ENCODE measurements at regions of chr10 and their contacts with region 1.

Region 1: GRCh38 chr10:28604567-28605536 is 71.9 kb downstream of the WAC start:
- DNase-seq: no peak
- ATAC-seq: no peak
- H3K4me3 ChIP-seq: no peak overlapping the region
- H3K27ac ChIP-seq: no peak overlapping the region
- H3K4me1 ChIP-seq: no peaks in the 10 kb centered on the region
- H3K27me3 ChIP-seq: no peaks in the 10 kb centered on the region
- CTCF ChIP-seq: no peak
- EP300 ChIP-seq: no peak
- POLR2A ChIP-seq: no peak
- RAD21 ChIP-seq: no peak

Region 2: DNA sequence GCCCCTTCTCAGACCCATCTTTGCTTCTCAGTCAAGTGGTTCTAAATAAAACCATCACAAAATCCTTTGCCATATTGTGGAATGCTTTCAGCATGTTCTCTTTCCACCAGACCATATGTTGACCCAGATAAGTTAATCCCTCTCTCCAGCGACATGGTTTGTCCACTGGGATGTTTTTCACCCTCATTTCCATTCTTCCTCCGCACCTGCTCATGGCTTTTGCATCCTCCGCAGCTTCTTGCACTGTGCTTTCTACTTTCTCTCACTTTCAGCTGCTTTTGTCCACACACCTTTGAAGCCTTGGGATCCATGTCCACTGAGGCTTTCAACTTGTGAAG is 124.3 kb before region 1 on chr10:
- CTCF ChIA-PET with region 1: no interaction called
- POLR2A ChIA-PET with region 1: no interaction called
- in situ Hi-C with region 1: no loop called
- intact Hi-C with region 1: no loop called
- DNase-seq: no peak
- ATAC-seq: no peak
- H3K4me3 ChIP-seq: no peak overlapping the region
- H3K27ac ChIP-seq: no peak overlapping the region
- H3K4me1 ChIP-seq: no peaks in the 10 kb centered on the region
- H3K27me3 ChIP-seq: peaks cover 1 to 3% of the 10 kb centered on the region in 2 experiments; a peak in 1 of 5 replicates
- CTCF ChIP-seq: no peak
- EP300 ChIP-seq: no peak
- POLR2A ChIP-seq: no peak
- RAD21 ChIP-seq: no peak

Region 3: DNA sequence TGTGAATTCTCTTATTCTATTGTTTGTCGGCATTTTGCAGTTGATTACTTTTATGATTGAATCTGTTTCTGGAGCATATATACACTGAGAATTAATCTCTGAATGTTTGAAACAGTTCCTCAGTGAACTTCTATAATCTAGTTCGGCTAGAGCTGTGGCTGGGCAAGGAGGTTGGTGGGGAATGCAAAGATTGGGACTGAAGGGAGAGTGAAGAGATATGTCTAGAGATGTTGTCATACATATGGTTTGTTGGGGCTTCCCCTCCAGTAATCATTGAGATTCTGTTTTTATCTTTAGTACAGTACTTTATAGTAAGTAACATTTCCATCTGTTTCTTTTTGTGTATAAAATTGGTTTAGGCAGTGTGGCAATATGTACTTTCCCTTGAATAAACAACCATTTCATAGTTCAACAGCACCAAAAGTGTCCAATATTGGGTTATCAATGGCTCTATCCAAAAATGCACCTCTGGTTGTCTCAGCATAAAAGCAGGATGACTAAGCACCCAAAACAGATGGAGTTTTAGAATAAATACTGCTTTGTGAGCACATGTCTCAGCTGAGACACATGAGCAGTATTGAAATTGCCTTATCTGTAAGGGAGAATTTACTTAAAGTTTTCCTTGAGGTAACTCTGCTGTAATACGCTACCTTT is 35.2 kb before region 1 on chr10:
- CTCF ChIA-PET with region 1: no interaction called
- POLR2A ChIA-PET with region 1: no interaction called
- in situ Hi-C with region 1: no loop called
- intact Hi-C with region 1: loop called (anchors 5 kb)
- DNase-seq: peak; percentile 66
- ATAC-seq: peak; percentile 68
- H3K4me3 ChIP-seq: no peak overlapping the region
- H3K27ac ChIP-seq: no peak overlapping the region
- H3K4me1 ChIP-seq: peaks cover 69% of the 10 kb centered on the region
- H3K27me3 ChIP-seq: no peaks in the 10 kb centered on the region; a peak in 1 of 5 replicates
- CTCF ChIP-seq: no peak
- EP300 ChIP-seq: peak in 1 of 2 experiments; percentile 13; a peak in 1 of 4 replicates
- POLR2A ChIP-seq: no peak
- RAD21 ChIP-seq: no peak

Region 4: DNA sequence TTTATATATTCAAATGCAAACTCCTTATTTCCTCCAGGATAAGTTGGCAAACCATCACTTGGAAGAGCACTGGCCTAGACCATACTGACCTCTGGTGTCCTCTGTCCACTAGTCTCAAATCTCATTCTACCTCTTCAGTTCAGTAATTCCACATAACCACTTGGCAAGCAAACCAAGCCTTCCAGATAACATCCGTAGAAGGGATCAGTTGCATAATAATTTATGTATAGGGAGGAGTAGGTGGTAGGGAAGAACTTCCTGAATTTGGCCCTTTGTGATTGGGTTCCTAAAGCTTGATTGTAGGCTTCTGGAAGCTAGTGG is 16.9 kb before region 1 on chr10:
- CTCF ChIA-PET with region 1: no interaction called
- POLR2A ChIA-PET with region 1: no interaction called
- in situ Hi-C with region 1: no loop called
- intact Hi-C with region 1: no loop called
- DNase-seq: no peak
- ATAC-seq: peak; percentile 39; the same call in 1 of the 3 replicates
- H3K4me3 ChIP-seq: no peak overlapping the region
- H3K27ac ChIP-seq: no peak overlapping the region
- H3K4me1 ChIP-seq: no peaks in the 10 kb centered on the region
- H3K27me3 ChIP-seq: no peaks in the 10 kb centered on the region
- CTCF ChIP-seq: no peak
- EP300 ChIP-seq: no peak
- POLR2A ChIP-seq: no peak
- RAD21 ChIP-seq: no peak

Measured in HepG2 (cell line).